Colonic mucosa (tissue), 4 donors: ENCODE measurements at regions of chr11 and their contacts with region 1.

Region 1: GRCh38 chr11:8092587-8093424 is 11.8 kb downstream of the TUB start:
- DNase-seq: peak; percentile 80
- H3K4me3 ChIP-seq: no peak overlapping the region
- H3K27ac ChIP-seq: no peak overlapping the region
- H3K4me1 ChIP-seq: no peaks in the 10 kb centered on the region
- H3K27me3 ChIP-seq: no peaks in the 10 kb centered on the region
- CTCF ChIP-seq: peak; percentile 47

Region 2: DNA sequence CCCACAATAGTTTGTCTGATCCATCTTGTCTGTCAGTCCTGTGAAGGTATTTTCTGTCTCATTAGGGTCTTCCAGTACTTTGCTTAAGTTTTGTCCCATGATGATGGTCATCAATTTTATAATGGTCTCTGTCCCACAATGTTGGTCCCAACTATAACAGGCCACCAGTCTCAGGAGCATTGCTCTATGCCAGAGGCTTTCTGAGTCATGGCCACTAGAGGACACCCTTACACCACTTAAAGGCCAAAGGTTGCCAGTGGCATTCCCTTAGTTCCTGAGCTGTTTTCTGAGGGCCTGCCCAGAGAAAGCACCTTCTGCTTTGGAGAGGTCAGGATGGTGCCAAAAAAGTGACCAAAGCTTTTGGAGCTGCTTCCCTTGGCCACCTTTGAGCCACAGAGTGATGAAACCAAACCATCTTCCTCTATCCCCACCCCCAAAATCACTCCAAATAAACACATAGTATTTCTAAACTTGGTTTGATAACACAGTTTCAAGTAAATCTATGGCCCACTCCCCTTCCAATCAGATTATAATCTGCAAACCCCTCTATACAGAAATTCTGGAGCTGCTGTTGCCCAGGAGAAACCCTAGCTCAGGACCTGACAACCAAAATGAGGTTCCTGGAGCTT is 86.3 kb before region 1 on chr11:
- intact Hi-C with region 1: loop called (anchors 2 kb)
- DNase-seq: peak; percentile 65
- H3K4me3 ChIP-seq: no peak overlapping the region
- H3K27ac ChIP-seq: no peak overlapping the region
- H3K4me1 ChIP-seq: no peaks in the 10 kb centered on the region
- H3K27me3 ChIP-seq: no peaks in the 10 kb centered on the region
- CTCF ChIP-seq: peak; percentile 83